Right cardiac atrium (tissue), 5 donors: ENCODE measurements at regions of chr15 and their contacts with region 1.

Region 1: DNA sequence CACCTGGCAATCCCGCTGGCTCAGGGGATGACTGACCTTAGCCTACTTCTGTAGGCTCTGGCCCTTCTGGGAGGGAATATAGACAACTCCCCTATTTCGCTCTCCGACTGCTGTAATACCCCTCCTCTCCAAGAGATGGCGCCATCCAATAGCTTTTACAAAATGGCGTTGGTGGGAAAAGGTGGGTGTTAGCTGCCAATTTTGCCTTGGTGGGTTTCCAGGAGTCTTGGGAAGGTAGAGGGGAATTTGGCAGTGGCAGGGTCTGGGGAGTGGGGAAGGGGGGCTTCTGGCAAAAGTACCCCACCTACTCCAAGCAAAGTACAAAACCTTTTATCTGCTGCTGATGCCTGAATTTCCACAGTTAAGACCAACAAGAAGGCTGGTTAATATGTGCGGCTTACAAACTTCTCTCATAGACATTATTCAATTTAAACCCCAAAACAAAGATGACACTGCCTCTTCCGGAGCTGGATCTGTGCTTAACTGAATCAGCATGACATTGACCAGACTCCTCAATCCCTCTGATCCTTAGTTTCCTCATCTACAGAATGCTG is 62.1 kb downstream of the RASGRF1 start:
- DNase-seq: peak in 2 of 3 donors; percentile 24 to 60
- ATAC-seq: no peak
- H3K4me3 ChIP-seq: no peak overlapping the region
- H3K27ac ChIP-seq: no peak overlapping the region
- H3K4me1 ChIP-seq: no peaks in the 10 kb centered on the region
- H3K27me3 ChIP-seq: no peaks in the 10 kb centered on the region

Region 2: DNA sequence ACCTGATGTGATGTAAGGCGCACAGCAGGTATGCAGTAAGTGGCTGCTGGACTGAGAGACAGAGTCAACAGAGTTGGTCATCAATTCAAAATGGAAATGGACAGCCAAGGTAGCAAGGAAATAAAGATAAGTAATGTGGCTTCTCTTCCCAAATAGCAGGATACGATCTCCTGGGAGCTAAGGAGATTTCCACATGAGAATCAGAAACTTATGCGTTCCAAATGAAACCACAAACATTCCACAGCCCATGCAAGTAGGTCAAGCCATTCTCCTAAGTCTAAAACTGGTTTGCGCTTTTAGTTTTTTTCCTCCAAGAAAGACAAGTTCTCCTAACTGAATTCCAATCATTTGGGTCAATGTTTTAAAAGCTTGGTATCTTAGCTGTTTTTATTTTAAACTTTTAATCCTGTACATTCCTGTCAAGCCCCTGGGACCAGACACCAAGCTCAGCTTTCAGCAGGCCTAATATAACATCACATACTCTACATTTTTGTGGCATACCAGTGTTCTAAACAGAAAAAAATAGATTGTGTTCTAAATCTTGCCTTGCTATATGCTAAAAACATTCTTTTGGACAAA is 1883.9 kb before region 1 on chr15:
- intact Hi-C with region 1: no loop called
- DNase-seq: no peak
- ATAC-seq: peak in 1 of 2 donors; percentile 36
- H3K4me3 ChIP-seq: no peak overlapping the region
- H3K27ac ChIP-seq: no peak overlapping the region
- H3K4me1 ChIP-seq: peaks cover 3% of the 10 kb centered on the region
- H3K27me3 ChIP-seq: no peaks in the 10 kb centered on the region

Region 3: GRCh38 chr15:79184465-79184892 is 156.0 kb after region 1 on chr15:
- intact Hi-C with region 1: loop called (anchors 2 to 5 kb)
- DNase-seq: peak; percentile 72 to 91 (median 81)
- ATAC-seq: peak in 1 of 2 donors; percentile 61
- H3K4me3 ChIP-seq: no peak overlapping the region
- H3K27ac ChIP-seq: no peak overlapping the region
- H3K4me1 ChIP-seq: no peaks in the 10 kb centered on the region
- H3K27me3 ChIP-seq: no peaks in the 10 kb centered on the region